Natural killer cell (primary cell): ENCODE measurements at regions of chr2 and their contacts with region 1.

Region 1: GRCh38 chr2:237572021-237572741 is 5.8 kb downstream of the PRLH start:
- DNase-seq: peak; percentile 79 to 91
- ATAC-seq: peak; percentile 83 to 99 (median 98)
- H3K4me3 ChIP-seq: no peak overlapping the region
- H3K4me3 Mint-ChIP-seq: no peak overlapping the region
- H3K27ac ChIP-seq: no peak overlapping the region
- H3K27ac Mint-ChIP-seq: no peak overlapping the region
- H3K4me1 ChIP-seq: peaks cover 6% of the 10 kb centered on the region
- H3K4me1 Mint-ChIP-seq: peaks cover 5 to 6% of the 10 kb centered on the region in 2 donors
- H3K27me3 ChIP-seq: no peaks in the 10 kb centered on the region
- H3K27me3 Mint-ChIP-seq: peaks cover 0 to 5% of the 10 kb centered on the region in 2 donors
- CTCF ChIP-seq: peak; percentile 97

Region 2: DNA sequence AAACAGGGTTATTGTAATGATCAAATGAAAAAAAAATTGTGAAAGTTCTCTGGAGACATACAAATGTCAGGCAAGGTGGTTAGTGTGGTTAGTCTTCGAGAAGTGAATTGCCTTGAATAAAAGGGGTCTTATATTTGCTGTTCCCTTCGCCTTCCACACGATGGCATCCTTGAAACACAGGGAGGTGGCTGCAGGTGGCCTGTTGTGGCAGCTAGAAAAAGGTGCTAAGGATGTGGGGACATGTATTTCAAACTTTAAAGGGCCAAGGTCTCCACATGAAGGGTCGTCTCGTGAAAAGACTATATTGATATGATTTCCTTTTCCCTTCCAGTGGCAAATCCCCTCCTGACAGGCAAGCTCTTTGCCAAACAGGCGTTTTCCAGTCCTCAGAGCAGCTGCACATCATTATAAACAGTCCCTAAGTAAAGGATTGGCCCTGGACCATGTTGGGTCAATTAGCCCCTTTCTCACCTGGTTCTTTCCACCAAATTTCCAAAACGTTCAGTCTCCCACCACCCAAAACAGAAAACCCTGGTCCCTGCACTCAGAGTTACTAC is 418.0 kb before region 1 on chr2:
- intact Hi-C with region 1: loop called (anchors 5 kb)
- DNase-seq: peak in 1 of 2 donors; percentile 76
- ATAC-seq: peak in 1 of 3 donors; percentile 48
- H3K4me3 ChIP-seq: no peak overlapping the region
- H3K4me3 Mint-ChIP-seq: no peak overlapping the region
- H3K27ac ChIP-seq: no peak overlapping the region
- H3K27ac Mint-ChIP-seq: no peak overlapping the region
- H3K4me1 ChIP-seq: no peaks in the 10 kb centered on the region
- H3K4me1 Mint-ChIP-seq: peaks cover 2 to 4% of the 10 kb centered on the region in 2 donors
- H3K27me3 ChIP-seq: no peaks in the 10 kb centered on the region
- H3K27me3 Mint-ChIP-seq: peaks cover 7 to 17% of the 10 kb centered on the region in 2 donors
- CTCF ChIP-seq: no peak

Region 3: GRCh38 chr2:237421542-237422116 is 150.6 kb before region 1 on chr2:
- intact Hi-C with region 1: loop called (anchors 5 kb)
- DNase-seq: peak; percentile 68 to 90
- ATAC-seq: peak; percentile 61 to 93 (median 90)
- H3K4me3 ChIP-seq: no peak overlapping the region
- H3K4me3 Mint-ChIP-seq: peak overlapping the region; percentile 30
- H3K27ac ChIP-seq: no peak overlapping the region
- H3K27ac Mint-ChIP-seq: no peak overlapping the region
- H3K4me1 ChIP-seq: peaks cover 8% of the 10 kb centered on the region
- H3K4me1 Mint-ChIP-seq: peaks cover 6 to 7% of the 10 kb centered on the region in 2 donors
- H3K27me3 ChIP-seq: no peaks in the 10 kb centered on the region
- H3K27me3 Mint-ChIP-seq: peaks cover 13 to 41% of the 10 kb centered on the region in 2 donors
- CTCF ChIP-seq: peak; percentile 83

Region 4: GRCh38 chr2:237512774-237513466 is 59.3 kb before region 1 on chr2:
- intact Hi-C with region 1: loop called (anchors 1 kb)
- DNase-seq: peak; percentile 72 to 88
- ATAC-seq: peak; percentile 70 to 86 (median 85)
- H3K4me3 ChIP-seq: no peak overlapping the region
- H3K4me3 Mint-ChIP-seq: no peak overlapping the region
- H3K27ac ChIP-seq: no peak overlapping the region
- H3K27ac Mint-ChIP-seq: no peak overlapping the region
- H3K4me1 ChIP-seq: no peaks in the 10 kb centered on the region
- H3K4me1 Mint-ChIP-seq: no peaks in the 10 kb centered on the region
- H3K27me3 ChIP-seq: no peaks in the 10 kb centered on the region
- H3K27me3 Mint-ChIP-seq: peaks cover 9 to 11% of the 10 kb centered on the region in 2 donors
- CTCF ChIP-seq: peak; percentile 78